Left cardiac atrium (tissue), 4 donors: ENCODE measurements at regions of chr2 and their contacts with region 1.

Region 1: GRCh38 chr2:134137182-134137611 is 116.7 kb upstream of the MGAT5 start:
- DNase-seq: peak; percentile 52
- ATAC-seq: peak; percentile 20 to 52

Region 2: GRCh38 chr2:132923787-132924186 is 1213.4 kb before region 1 on chr2:
- intact Hi-C with region 1: no loop called
- DNase-seq: no peak
- ATAC-seq: peak; percentile 59 to 86

Region 3: GRCh38 chr2:134173338-134174016 is 36.3 kb after region 1 on chr2:
- intact Hi-C with region 1: loop called in 1 of 2 experiments (anchors 5 kb)
- DNase-seq: peak; percentile 51
- ATAC-seq: peak; percentile 64 to 77